ENCODE measurements at regions of chr5 and their contacts with region 1.

Region 1: DNA sequence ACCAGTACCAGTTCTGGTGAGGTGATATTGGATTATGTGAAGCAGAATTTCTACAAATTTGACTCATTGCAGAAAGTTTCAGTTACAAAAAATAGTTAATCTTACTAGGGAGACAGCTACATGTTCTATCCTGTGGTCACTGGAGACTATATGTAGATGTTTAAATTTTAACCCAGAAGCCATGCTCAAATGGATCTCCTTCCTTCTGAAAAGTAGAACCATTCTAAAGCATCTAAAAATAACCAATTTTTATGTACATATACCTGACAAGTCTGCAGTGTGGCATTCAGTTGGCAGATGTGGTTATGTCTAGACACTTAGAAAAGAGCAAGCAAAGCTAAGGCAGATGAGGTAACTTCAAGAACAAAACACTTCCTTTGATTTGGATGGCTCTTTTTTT is 65.5 kb upstream of the POU4F3 start:
- DNase-seq: no peak
- ATAC-seq: no peak
- H3K4me3 ChIP-seq: no peak overlapping the region
- H3K4me3 Mint-ChIP-seq: no peak overlapping the region
- H3K27ac ChIP-seq: no peak overlapping the region
- H3K27ac Mint-ChIP-seq: no peak overlapping the region
- H3K4me1 ChIP-seq: no peaks in the 10 kb centered on the region
- H3K4me1 Mint-ChIP-seq: no peaks in the 10 kb centered on the region
- H3K27me3 ChIP-seq: no peaks in the 10 kb centered on the region
- H3K27me3 Mint-ChIP-seq: no peaks in the 10 kb centered on the region
- CTCF ChIP-seq: no peak

Region 2: DNA sequence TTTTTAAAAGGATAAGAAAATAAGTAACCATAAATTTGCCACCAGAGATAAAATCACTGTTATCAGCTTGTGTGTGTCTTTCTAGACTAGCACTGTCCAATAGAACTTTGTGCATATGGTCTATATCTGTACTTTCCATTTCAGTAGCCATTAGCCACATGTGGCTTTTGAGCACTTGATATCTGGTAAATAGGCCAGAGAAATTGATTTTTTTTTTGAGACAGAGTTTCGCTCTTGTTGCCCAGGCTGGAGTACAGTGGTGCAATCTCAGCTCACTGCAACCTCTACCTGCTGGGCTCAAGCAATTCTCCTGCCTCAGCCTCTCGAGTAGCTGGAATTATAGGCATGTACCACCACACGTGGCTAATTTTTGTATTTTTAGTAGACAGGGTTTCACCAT is 51.9 kb before region 1 on chr5:
- CTCF ChIA-PET with region 1: no interaction called
- POLR2A ChIA-PET with region 1: no interaction called
- intact Hi-C with region 1: loop called (anchors 10 kb)
- DNase-seq: no peak
- ATAC-seq: no peak
- H3K4me3 ChIP-seq: no peak overlapping the region
- H3K4me3 Mint-ChIP-seq: no peak overlapping the region
- H3K27ac ChIP-seq: no peak overlapping the region
- H3K27ac Mint-ChIP-seq: no peak overlapping the region
- H3K4me1 ChIP-seq: peaks cover 5 to 9% of the 10 kb centered on the region in 2 donors
- H3K4me1 Mint-ChIP-seq: peaks cover 16% of the 10 kb centered on the region
- H3K27me3 ChIP-seq: no peaks in the 10 kb centered on the region
- H3K27me3 Mint-ChIP-seq: no peaks in the 10 kb centered on the region
- CTCF ChIP-seq: no peak